ENCODE measurements at regions of chr3 and their contacts with region 1.

Region 1: DNA sequence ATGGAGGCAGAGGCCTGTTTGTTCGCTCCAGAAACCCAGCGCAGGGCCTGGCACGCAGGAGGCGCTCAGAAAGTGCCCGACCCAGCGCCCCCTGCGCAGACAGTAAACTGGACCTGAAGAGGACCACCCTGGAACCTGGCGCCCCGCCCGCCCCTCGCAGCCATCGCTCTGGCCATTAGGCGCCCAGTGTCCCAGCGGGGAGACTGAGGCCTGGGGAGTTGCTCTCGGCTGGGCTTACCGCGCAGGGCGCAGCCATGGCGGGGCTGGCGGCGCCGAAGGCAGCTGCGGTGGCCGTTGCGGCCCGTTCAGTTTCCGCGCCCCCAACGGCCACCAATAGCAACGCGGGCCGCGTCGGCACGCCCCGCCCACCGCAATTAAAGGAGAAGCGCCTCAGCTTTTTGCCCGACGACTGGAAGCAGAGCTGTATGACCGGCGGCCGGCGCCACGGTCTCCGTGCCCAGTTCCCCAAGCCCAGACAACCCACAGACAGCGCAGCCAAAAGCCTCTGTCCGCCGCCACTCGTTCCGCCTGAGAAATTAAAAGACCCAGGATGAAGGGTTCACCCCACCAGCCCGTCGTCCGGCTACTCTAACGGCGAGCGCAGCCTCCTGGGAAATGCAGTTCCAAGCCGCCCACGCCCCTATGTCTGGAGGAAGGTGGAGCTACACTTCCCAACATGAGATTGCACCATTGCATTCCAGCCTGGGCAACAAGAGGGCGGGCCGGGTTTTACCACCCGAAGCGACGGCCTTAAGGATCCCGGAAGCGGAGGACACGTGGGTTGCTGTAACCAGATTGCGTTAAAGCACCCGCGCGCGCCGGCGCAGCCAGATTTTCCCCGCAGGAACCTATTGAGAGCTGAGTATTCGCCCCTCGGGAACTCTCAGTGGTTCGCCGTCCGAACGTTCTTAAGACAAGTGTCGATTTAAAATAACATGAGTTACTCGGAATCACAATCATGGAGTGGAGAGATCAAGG is at the start of gene POC1A:
- DNase-seq: peak; percentile 98
- H3K4me3 ChIP-seq: peak within 1 kb of the TSS; percentile 51 to 52
- H3K27ac ChIP-seq: peak within 1 kb of the TSS; percentile 83 to 87
- H3K4me1 ChIP-seq: peaks cover 2% of the 10 kb centered on the region
- H3K27me3 ChIP-seq: no peaks in the 10 kb centered on the region
- CTCF ChIP-seq: peak in 3 of 4 experiments; percentile 19 to 49 (median 49)
- POLR2A ChIP-seq: peak; percentile 27
- total RNA-seq, gene POC1A: 2.5 to 5.3 TPM

Region 2: GRCh38 chr3:51941798-51942602 is 212.4 kb before region 1 on chr3 and contains the starts of genes PARP3 and RRP9:
- intact Hi-C with region 1: loop called (anchors 5 kb)
- DNase-seq: peak; percentile 100
- H3K4me3 ChIP-seq: peak within 1 kb of the TSS; percentile 60 to 66
- H3K27ac ChIP-seq: peak within 1 kb of the TSS; percentile 80 to 87
- H3K4me1 ChIP-seq: peaks cover 9% of the 10 kb centered on the region
- H3K27me3 ChIP-seq: no peaks in the 10 kb centered on the region
- CTCF ChIP-seq: peak; percentile 98 to 100 (median 100)
- POLR2A ChIP-seq: peak; percentile 53
- total RNA-seq, gene PARP3: 22.0 to 45.9 TPM
- total RNA-seq, gene RRP9: 14.9 to 18.6 TPM

Region 3: GRCh38 chr3:52197842-52198668 is 43.6 kb after region 1 on chr3 and contains the start of gene ALAS1:
- intact Hi-C with region 1: loop called (anchors 5 kb)
- DNase-seq: peak; percentile 86
- H3K4me3 ChIP-seq: peak within 1 kb of the TSS; percentile 57 to 94
- H3K27ac ChIP-seq: peak within 1 kb of the TSS; percentile 81 to 82
- H3K4me1 ChIP-seq: peaks cover 7% of the 10 kb centered on the region
- H3K27me3 ChIP-seq: no peaks in the 10 kb centered on the region
- CTCF ChIP-seq: peak in 2 of 4 experiments; percentile 30 to 45
- POLR2A ChIP-seq: peak; percentile 98
- total RNA-seq, gene ALAS1: 39.8 to 58.8 TPM

Region 4: DNA sequence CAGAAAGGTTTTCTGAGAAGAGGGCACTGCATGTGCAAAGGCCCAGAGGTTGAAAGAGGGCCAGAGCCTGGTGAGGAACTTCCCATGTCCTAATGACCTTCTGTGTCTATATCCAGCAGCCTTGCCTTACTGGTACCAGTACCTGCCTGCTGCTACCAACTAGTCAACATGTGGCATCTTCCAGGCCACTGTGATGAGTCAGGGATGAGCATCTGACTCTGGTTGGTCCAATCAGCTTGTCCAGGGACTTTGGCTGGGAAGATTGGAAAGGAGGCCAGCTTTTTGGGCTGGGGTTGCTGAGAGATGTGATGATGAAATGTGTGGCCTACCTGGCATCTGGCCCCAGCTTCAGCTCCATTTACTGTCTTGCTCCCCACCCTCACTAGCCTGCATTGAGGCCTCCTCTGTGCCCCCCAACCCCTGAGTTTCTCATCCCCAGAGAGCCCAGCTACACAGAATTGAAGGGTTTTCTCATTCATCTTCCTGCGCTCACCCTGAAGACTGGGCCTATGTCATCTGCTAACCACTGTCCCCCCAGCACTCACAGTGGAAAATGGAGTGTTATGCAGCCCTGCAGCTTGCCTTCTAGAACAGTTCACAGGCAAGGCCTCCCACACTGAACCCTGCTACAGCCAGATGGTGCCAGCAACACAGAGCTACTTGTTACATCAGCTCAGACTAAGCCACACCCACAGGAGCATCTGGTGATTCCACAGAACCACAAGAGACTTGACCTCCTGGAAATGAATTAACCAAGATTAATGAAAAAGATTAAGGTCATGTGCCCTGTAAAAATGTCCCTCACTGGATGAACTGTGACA is 85.9 kb after region 1 on chr3:
- intact Hi-C with region 1: no loop called
- DNase-seq: no peak
- H3K4me3 ChIP-seq: no peak overlapping the region
- H3K27ac ChIP-seq: peak overlapping the region in 1 of 2 donors; percentile 83
- H3K4me1 ChIP-seq: peaks cover 18% of the 10 kb centered on the region
- H3K27me3 ChIP-seq: no peaks in the 10 kb centered on the region
- CTCF ChIP-seq: no peak
- POLR2A ChIP-seq: no peak

Measured in prostate gland (tissue), 2 donors.